CD4-positive, alpha-beta T cell (primary cell): ENCODE measurements at regions of chr15 and their contacts with region 1.

Region 1: GRCh38 chr15:42495361-42496212 is at the start of gene SNAP23:
- DNase-seq: peak; percentile 59 to 91 (median 76)
- ATAC-seq: peak; percentile 92
- H3K4me3 ChIP-seq: peak within 1 kb of the TSS; percentile 98
- H3K4me3 Mint-ChIP-seq: peak within 1 kb of the TSS; percentile 98
- H3K27ac ChIP-seq: peak within 1 kb of the TSS; percentile 64 to 70
- H3K27ac Mint-ChIP-seq: peak within 1 kb of the TSS; percentile 94
- H3K4me1 ChIP-seq: peaks cover 52% of the 10 kb centered on the region
- H3K4me1 Mint-ChIP-seq: peaks cover 75% of the 10 kb centered on the region
- H3K27me3 ChIP-seq: no peaks in the 10 kb centered on the region
- H3K27me3 Mint-ChIP-seq: no peaks in the 10 kb centered on the region
- CTCF ChIP-seq: no peak
- total RNA-seq, gene SNAP23: 37.4 to 40.1 TPM

Region 2: DNA sequence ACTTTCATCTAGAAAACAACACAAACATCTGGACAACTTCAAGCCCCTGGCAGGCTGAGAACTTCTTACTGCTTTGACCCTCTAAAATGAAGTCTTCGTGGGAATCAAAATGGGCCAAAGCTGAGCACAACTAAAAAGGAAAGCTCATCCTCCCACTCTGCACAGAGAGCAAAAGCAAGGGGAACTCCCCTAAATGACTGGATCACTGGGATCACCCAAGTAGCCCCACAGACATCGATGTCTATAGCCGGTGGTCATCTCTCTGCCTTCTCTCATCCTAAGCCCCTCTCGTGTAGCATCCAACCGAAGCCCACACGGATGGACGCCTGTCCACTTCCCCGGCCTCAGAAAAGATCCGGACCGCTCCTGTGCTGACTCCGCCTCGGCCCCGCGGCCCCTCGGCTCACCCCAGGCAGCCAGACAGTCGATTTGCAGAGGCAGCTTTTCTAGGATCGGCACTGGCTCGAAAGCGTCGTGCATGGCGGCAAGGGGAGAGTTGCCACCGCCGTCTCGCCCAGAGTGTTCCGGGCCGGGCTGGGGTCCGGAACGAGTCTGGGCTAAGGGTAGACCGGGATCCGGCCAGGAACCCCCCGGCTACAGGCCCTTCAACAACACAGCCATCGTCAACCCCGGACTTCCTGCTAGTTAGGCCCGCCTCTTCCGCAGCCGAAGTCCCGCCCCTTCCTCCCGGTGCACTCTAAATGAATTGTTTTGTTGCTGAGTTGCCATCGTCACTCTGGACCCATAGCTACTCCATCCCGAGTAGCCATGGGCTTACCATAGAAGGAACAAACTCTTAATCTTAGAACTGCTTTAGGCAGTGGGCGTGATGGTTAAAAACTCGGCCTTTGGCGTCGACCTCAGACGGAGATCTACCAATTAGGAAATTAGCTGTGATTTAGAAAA is 287.7 kb before region 1 on chr15 and contains the start of gene VPS39:
- CTCF ChIA-PET with region 1: no interaction called
- POLR2A ChIA-PET with region 1: interaction called, 3 read pairs
- intact Hi-C with region 1: loop called in 1 of 2 experiments (anchors 10 kb)
- DNase-seq: peak; percentile 73 to 91 (median 78)
- ATAC-seq: peak; percentile 98
- H3K4me3 ChIP-seq: peak within 1 kb of the TSS; percentile 91
- H3K4me3 Mint-ChIP-seq: peak within 1 kb of the TSS; percentile 82
- H3K27ac ChIP-seq: peak within 1 kb of the TSS; percentile 64 to 75
- H3K27ac Mint-ChIP-seq: peak within 1 kb of the TSS; percentile 77
- H3K4me1 ChIP-seq: peaks cover 31% of the 10 kb centered on the region
- H3K4me1 Mint-ChIP-seq: peaks cover 47% of the 10 kb centered on the region
- H3K27me3 ChIP-seq: no peaks in the 10 kb centered on the region
- H3K27me3 Mint-ChIP-seq: no peaks in the 10 kb centered on the region
- CTCF ChIP-seq: no peak
- total RNA-seq, gene VPS39: 73.4 to 82.5 TPM

Region 3: GRCh38 chr15:42474827-42475226 is 20.8 kb before region 1 on chr15:
- CTCF ChIA-PET with region 1: interaction called, 6 read pairs
- POLR2A ChIA-PET with region 1: interaction called, 12 read pairs
- intact Hi-C with region 1: no loop called
- DNase-seq: no peak
- ATAC-seq: no peak
- H3K4me3 ChIP-seq: no peak overlapping the region
- H3K4me3 Mint-ChIP-seq: no peak overlapping the region
- H3K27ac ChIP-seq: no peak overlapping the region
- H3K27ac Mint-ChIP-seq: peak overlapping the region; percentile 39
- H3K4me1 ChIP-seq: no peaks in the 10 kb centered on the region
- H3K4me1 Mint-ChIP-seq: peaks cover 25% of the 10 kb centered on the region
- H3K27me3 ChIP-seq: no peaks in the 10 kb centered on the region
- H3K27me3 Mint-ChIP-seq: no peaks in the 10 kb centered on the region
- CTCF ChIP-seq: no peak

Region 4: DNA sequence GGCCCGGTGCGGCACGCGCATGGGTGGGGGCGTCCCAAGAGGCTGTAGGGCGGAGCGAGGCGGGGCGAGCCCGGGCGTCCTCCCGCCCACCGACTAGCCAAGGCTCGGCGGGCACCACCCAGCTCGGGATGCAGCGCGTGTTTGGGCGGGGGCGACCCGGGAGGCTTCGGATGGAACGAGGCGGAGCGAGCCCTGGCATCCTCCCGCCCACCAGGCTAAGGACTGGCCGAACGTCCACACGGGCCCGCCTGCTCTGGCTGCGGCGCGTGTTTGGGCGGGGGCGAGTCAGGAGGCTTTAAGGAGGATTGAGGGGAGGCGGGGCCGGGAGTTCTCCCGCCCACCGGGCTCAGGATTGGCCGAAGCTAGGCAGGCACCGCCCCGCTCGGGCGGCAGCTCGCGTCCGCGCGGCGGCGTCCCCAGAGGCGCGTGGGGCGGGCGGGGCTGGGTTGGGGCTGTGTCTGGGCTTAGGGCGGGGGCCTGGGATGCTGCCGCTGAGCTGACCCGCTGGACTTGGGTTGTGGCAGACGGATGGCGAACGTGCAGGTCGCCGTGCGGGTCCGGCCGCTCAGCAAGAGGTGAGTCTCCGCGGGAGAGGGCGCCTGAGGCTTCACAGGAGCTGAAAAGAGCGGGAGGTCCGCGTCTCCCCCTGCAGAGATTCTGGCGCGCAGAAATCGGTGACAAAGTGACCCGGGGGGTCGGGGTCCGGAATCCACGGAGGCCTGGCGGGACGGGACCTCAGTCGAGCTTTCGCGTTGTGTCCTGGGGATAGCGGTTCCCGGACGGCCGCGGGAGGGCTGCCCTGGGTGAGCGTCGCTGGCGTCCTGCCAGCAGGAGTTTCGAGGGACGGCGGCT is 79.8 kb after region 1 on chr15 and contains the start of gene STARD9:
- CTCF ChIA-PET with region 1: interaction called, 3 read pairs
- POLR2A ChIA-PET with region 1: interaction called, 16 read pairs
- intact Hi-C with region 1: loop called in 1 of 2 experiments (anchors 5 kb)
- DNase-seq: peak; percentile 84 to 97 (median 92)
- ATAC-seq: peak; percentile 94
- H3K4me3 ChIP-seq: peak within 1 kb of the TSS; percentile 78
- H3K4me3 Mint-ChIP-seq: peak within 1 kb of the TSS; percentile 94
- H3K27ac ChIP-seq: peak within 1 kb of the TSS; percentile 38 to 46
- H3K27ac Mint-ChIP-seq: peak within 1 kb of the TSS; percentile 76
- H3K4me1 ChIP-seq: peaks cover 16% of the 10 kb centered on the region
- H3K4me1 Mint-ChIP-seq: peaks cover 28% of the 10 kb centered on the region
- H3K27me3 ChIP-seq: no peaks in the 10 kb centered on the region
- H3K27me3 Mint-ChIP-seq: peaks cover 16% of the 10 kb centered on the region
- CTCF ChIP-seq: no peak
- total RNA-seq, gene STARD9: 2.8 to 4.6 TPM

Region 5: DNA sequence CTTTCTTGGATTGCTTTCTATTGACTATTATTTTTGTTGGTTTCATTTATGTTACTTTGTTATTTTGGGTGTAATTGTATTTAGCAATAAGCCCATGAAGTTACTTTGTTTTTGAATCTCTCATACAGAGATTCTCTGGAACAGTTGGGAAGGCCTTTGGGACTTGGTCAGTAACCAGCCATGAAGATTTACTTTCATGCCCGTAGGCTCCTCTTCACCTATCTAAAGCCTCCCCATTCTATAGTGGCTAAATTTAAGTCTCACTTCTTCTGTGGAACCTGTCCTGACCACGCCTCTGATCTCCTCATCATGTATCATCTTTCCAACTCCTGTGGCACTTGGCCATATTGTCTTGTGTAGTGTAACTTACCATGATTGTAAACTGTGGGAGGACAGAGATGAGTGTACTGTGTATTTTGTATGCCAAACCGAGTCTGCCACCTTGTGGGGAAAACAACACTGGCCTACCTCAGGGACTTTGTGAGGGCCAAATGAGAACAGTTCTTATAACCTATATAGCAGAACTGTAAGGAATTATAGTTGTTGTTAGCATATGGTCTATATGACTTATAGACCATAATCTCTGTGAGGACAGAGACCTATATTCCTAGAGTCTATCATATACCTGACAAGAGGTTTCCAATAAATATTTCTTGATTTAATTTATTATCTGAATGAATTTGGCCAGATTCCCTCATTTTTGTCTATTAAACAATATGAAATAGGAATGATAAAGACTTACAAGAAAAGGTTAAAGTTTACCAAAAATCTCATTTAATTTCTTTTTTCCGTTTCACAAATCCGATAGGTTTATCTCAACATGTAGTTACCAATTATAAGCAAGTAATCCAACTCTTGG is 154.8 kb after region 1 on chr15:
- CTCF ChIA-PET with region 1: no interaction called
- POLR2A ChIA-PET with region 1: no interaction called
- intact Hi-C with region 1: loop called in 1 of 2 experiments (anchors 5 kb)
- DNase-seq: peak; percentile 28 to 71 (median 40)
- ATAC-seq: peak; percentile 84
- H3K4me3 ChIP-seq: no peak overlapping the region
- H3K4me3 Mint-ChIP-seq: no peak overlapping the region
- H3K27ac ChIP-seq: no peak overlapping the region
- H3K27ac Mint-ChIP-seq: no peak overlapping the region
- H3K4me1 ChIP-seq: no peaks in the 10 kb centered on the region
- H3K4me1 Mint-ChIP-seq: no peaks in the 10 kb centered on the region
- H3K27me3 ChIP-seq: no peaks in the 10 kb centered on the region
- H3K27me3 Mint-ChIP-seq: no peaks in the 10 kb centered on the region
- CTCF ChIP-seq: peak; percentile 74

Region 6: DNA sequence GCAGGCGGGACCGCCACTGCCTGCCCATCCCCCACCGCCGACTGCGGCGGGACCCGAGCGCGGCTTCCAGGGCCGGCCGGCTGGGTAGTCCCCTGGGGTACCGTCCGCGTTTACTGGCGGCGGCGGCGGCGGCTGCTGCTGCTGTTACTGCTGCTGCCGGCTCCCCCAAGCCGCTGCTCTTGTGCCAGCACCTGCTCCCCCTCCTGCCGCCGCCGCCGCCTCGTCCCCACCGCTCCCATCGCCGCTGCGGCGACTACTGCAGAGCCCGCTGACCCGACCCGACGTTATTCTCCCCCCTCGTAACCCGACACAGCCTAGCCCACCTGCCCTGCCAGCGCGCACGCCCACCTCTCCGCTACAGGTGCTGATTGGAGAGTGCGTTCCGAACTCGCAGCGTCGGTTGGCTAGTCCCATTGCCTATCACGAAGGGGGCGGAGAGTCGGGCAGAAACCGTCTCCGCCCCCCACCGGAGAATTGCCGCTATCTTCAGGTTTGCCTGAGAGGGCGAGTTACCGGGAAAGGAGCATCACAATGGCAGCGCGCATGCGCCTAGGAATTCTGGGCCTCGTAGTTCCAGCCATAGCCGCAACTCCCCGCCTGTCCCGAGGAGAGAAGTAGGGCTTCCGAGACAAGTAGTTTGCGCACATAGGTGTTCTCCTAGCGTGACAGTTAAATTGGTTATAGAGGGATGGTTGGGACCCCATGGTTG is 425.1 kb after region 1 on chr15 and contains the start of gene TTBK2:
- CTCF ChIA-PET with region 1: no interaction called
- POLR2A ChIA-PET with region 1: no interaction called
- intact Hi-C with region 1: loop called in 1 of 2 experiments (anchors 5 kb)
- DNase-seq: peak; percentile 94 to 99 (median 98)
- ATAC-seq: peak; percentile 96
- H3K4me3 ChIP-seq: peak within 1 kb of the TSS; percentile 75
- H3K4me3 Mint-ChIP-seq: peak within 1 kb of the TSS; percentile 99
- H3K27ac ChIP-seq: peak within 1 kb of the TSS; percentile 59 to 63
- H3K27ac Mint-ChIP-seq: peak within 1 kb of the TSS; percentile 89
- H3K4me1 ChIP-seq: peaks cover 15% of the 10 kb centered on the region
- H3K4me1 Mint-ChIP-seq: peaks cover 35% of the 10 kb centered on the region
- H3K27me3 ChIP-seq: no peaks in the 10 kb centered on the region
- H3K27me3 Mint-ChIP-seq: no peaks in the 10 kb centered on the region
- CTCF ChIP-seq: peak; percentile 26
- total RNA-seq, gene TTBK2: 17.5 to 20.1 TPM